ENCODE measurements at regions of chr14 and their contacts with region 1.

Region 1: DNA sequence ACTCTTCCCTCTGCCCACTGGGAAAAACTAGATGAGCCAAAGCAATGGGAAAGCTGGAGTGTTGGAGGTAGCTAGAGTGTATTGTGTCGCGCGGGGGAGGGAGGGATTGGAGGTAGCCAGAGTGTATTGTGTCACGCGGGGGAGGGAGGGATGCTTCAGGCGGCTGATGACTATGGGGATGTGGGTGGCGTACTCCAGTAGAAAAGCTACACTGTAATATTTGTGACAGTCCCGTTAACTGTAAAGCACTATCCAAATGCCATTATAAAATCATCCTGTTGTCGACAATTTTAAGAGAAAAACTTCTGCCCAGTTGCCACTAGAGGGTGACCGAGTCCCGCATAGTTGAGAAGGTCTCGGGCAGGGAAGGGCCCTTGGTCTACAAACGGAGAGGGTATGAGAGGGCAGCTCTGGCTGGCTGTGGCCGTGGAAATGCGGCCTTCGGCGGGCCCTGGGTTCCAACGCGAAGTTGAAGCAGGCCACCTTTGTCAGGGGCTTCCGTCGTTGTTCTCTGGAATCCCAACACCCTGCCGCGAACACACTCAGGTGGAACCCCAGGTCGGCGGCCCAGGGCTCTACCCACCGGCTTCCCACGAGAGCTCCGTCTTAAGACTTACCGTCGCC is 15.1 kb upstream of the PLEK2 start:
- DNase-seq: peak; percentile 45 to 86 (median 73)
- ATAC-seq: peak; percentile 98
- H3K4me3 ChIP-seq: no peak overlapping the region
- H3K4me3 Mint-ChIP-seq: no peak overlapping the region
- H3K27ac ChIP-seq: no peak overlapping the region
- H3K27ac Mint-ChIP-seq: no peak overlapping the region
- H3K4me1 ChIP-seq: no peaks in the 10 kb centered on the region
- H3K4me1 Mint-ChIP-seq: peaks cover 2% of the 10 kb centered on the region
- H3K27me3 ChIP-seq: peaks cover 0 to 2% of the 10 kb centered on the region in 2 experiments
- H3K27me3 Mint-ChIP-seq: peaks cover 10% of the 10 kb centered on the region
- CTCF ChIP-seq: peak; percentile 82

Region 2: GRCh38 chr14:67446120-67447032 is 19.3 kb after region 1 on chr14:
- CTCF ChIA-PET with region 1: interaction called, 10 read pairs
- POLR2A ChIA-PET with region 1: no interaction called
- intact Hi-C with region 1: no loop called
- DNase-seq: no peak
- ATAC-seq: no peak
- H3K4me3 ChIP-seq: no peak overlapping the region
- H3K4me3 Mint-ChIP-seq: no peak overlapping the region
- H3K27ac ChIP-seq: no peak overlapping the region
- H3K27ac Mint-ChIP-seq: no peak overlapping the region
- H3K4me1 ChIP-seq: no peaks in the 10 kb centered on the region
- H3K4me1 Mint-ChIP-seq: no peaks in the 10 kb centered on the region
- H3K27me3 ChIP-seq: no peaks in the 10 kb centered on the region
- H3K27me3 Mint-ChIP-seq: no peaks in the 10 kb centered on the region
- CTCF ChIP-seq: no peak

Region 3: GRCh38 chr14:67526676-67527459 is 99.8 kb after region 1 on chr14:
- CTCF ChIA-PET with region 1: interaction called, 30 read pairs
- POLR2A ChIA-PET with region 1: interaction called, 3 read pairs
- intact Hi-C with region 1: loop called in 1 of 2 experiments (anchors 5 kb)
- DNase-seq: peak in 7 of 9 experiments; percentile 14 to 66 (median 30)
- ATAC-seq: peak; percentile 66
- H3K4me3 ChIP-seq: no peak overlapping the region
- H3K4me3 Mint-ChIP-seq: no peak overlapping the region
- H3K27ac ChIP-seq: no peak overlapping the region
- H3K27ac Mint-ChIP-seq: no peak overlapping the region
- H3K4me1 ChIP-seq: no peaks in the 10 kb centered on the region
- H3K4me1 Mint-ChIP-seq: no peaks in the 10 kb centered on the region
- H3K27me3 ChIP-seq: peaks cover 0 to 6% of the 10 kb centered on the region in 2 experiments
- H3K27me3 Mint-ChIP-seq: peaks cover 17% of the 10 kb centered on the region
- CTCF ChIP-seq: peak; percentile 55

Region 4: GRCh38 chr14:67557126-67557525 is 130.0 kb after region 1 on chr14:
- CTCF ChIA-PET with region 1: interaction called, 411 read pairs
- POLR2A ChIA-PET with region 1: no interaction called
- intact Hi-C with region 1: no loop called
- DNase-seq: no peak
- ATAC-seq: no peak
- H3K4me3 ChIP-seq: no peak overlapping the region
- H3K4me3 Mint-ChIP-seq: no peak overlapping the region
- H3K27ac ChIP-seq: no peak overlapping the region
- H3K27ac Mint-ChIP-seq: no peak overlapping the region
- H3K4me1 ChIP-seq: no peaks in the 10 kb centered on the region
- H3K4me1 Mint-ChIP-seq: no peaks in the 10 kb centered on the region
- H3K27me3 ChIP-seq: no peaks in the 10 kb centered on the region
- H3K27me3 Mint-ChIP-seq: no peaks in the 10 kb centered on the region
- CTCF ChIP-seq: no peak

Region 5: DNA sequence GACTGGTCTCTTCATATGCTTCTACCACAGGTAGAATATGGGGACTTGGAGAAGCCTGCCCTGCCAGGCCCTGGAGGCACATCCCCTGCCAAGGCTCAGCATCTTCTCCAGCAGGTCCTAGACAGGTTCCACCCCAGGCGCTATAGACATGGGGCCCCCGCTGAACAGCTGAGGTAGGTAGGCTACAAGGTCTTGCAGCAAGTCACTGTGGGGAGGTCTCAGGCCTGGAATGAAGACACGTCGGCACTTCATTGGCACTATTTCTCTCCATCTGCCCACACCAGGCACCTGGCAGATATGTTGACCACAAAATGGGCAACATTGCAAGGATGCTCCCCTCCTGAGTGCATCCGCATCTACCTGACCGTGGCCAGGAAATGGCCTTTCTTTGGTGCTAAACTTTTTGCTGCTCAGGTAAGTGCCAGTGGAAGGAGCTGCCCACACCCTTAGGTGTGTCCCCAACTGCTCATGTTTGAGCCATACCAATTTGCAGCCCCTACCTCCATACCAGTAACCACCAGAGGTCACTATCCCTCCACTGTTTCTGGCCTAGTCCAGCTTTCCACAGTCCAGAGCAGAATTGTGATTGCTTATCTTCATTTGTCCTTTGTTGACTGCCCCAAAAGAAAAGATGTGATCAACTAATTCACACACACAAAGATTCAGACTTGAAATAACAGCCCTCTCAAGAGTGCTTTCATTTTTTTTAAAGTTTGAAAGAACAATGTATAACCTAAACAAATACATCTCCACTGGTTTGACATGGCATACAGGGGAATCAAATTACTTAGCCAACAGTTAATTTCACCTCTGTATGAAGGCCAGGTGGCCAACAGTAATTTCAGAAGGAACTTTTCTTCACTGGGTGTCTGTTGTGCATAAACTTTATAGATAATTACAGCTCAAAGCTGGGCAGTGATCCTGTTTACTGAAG is 156.9 kb after region 1 on chr14:
- CTCF ChIA-PET with region 1: interaction called, 48 read pairs
- POLR2A ChIA-PET with region 1: interaction called, 4 read pairs
- intact Hi-C with region 1: no loop called
- DNase-seq: peak in 4 of 9 experiments; percentile 26 to 61 (median 40)
- ATAC-seq: peak; percentile 61
- H3K4me3 ChIP-seq: no peak overlapping the region
- H3K4me3 Mint-ChIP-seq: no peak overlapping the region
- H3K27ac ChIP-seq: no peak overlapping the region
- H3K27ac Mint-ChIP-seq: no peak overlapping the region
- H3K4me1 ChIP-seq: no peaks in the 10 kb centered on the region
- H3K4me1 Mint-ChIP-seq: no peaks in the 10 kb centered on the region
- H3K27me3 ChIP-seq: no peaks in the 10 kb centered on the region
- H3K27me3 Mint-ChIP-seq: no peaks in the 10 kb centered on the region
- CTCF ChIP-seq: peak; percentile 51

Region 6: GRCh38 chr14:67666750-67667449 is 239.8 kb after region 1 on chr14:
- CTCF ChIA-PET with region 1: interaction called, 18 read pairs
- POLR2A ChIA-PET with region 1: no interaction called
- intact Hi-C with region 1: loop called in 1 of 2 experiments (anchors 2 kb)
- DNase-seq: peak in 4 of 9 experiments; percentile 26 to 76 (median 46)
- ATAC-seq: peak; percentile 91
- H3K4me3 ChIP-seq: no peak overlapping the region
- H3K4me3 Mint-ChIP-seq: no peak overlapping the region
- H3K27ac ChIP-seq: peak overlapping the region in 1 of 2 experiments; percentile 21
- H3K27ac Mint-ChIP-seq: no peak overlapping the region
- H3K4me1 ChIP-seq: peaks cover 25% of the 10 kb centered on the region
- H3K4me1 Mint-ChIP-seq: peaks cover 60% of the 10 kb centered on the region
- H3K27me3 ChIP-seq: no peaks in the 10 kb centered on the region
- H3K27me3 Mint-ChIP-seq: no peaks in the 10 kb centered on the region
- CTCF ChIP-seq: peak; percentile 61

Region 7: GRCh38 chr14:67722293-67722692 is 295.2 kb after region 1 on chr14:
- CTCF ChIA-PET with region 1: no interaction called
- POLR2A ChIA-PET with region 1: no interaction called
- intact Hi-C with region 1: no loop called
- DNase-seq: no peak
- ATAC-seq: no peak
- H3K4me3 ChIP-seq: no peak overlapping the region
- H3K4me3 Mint-ChIP-seq: no peak overlapping the region
- H3K27ac ChIP-seq: no peak overlapping the region
- H3K27ac Mint-ChIP-seq: no peak overlapping the region
- H3K4me1 ChIP-seq: peaks cover 8% of the 10 kb centered on the region
- H3K4me1 Mint-ChIP-seq: peaks cover 6% of the 10 kb centered on the region
- H3K27me3 ChIP-seq: peaks cover 5 to 6% of the 10 kb centered on the region in 2 experiments
- H3K27me3 Mint-ChIP-seq: peaks cover 44% of the 10 kb centered on the region
- CTCF ChIP-seq: no peak